ENCODE measurements at regions of chr3 and their contacts with region 1.

Region 1: DNA sequence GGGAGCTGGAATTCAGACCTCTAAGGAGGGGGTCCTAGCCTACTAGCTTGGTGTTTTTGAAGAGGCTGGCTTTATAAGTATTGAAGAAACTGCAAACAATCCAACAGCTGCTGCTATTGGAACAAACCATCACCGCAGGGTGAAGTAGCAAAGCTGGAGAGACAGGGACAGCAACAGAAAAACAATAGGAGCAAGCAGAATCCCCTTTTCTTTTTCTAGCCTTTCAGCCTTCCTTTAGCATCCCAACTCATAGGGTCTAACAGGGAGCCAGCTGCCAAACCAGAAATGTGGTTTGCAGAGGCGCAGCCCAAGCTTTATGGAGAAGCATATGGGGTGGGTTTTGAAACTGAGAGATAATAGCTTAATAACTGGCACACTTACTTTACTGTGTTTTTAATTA is 106.2 kb upstream of the CHMP2B start:
- DNase-seq: no peak
- ATAC-seq: no peak
- H3K4me3 ChIP-seq: no peak overlapping the region
- H3K27ac ChIP-seq: no peak overlapping the region
- H3K4me1 ChIP-seq: no peaks in the 10 kb centered on the region
- H3K27me3 ChIP-seq: no peaks in the 10 kb centered on the region; the same call in 1 of the 2 replicates
- CTCF ChIP-seq: no peak
- POLR2A ChIP-seq: no peak
- RAD21 ChIP-seq: no peak

Region 2: GRCh38 chr3:87101861-87102625 is 18.8 kb before region 1 on chr3:
- CTCF ChIA-PET with region 1: no interaction called
- POLR2A ChIA-PET with region 1: no interaction called
- dilution Hi-C with region 1: no loop called
- in situ Hi-C with region 1: no loop called
- intact Hi-C with region 1: no loop called
- DNase-seq: no peak
- ATAC-seq: no peak
- H3K4me3 ChIP-seq: no peak overlapping the region
- H3K27ac ChIP-seq: no peak overlapping the region
- H3K4me1 ChIP-seq: no peaks in the 10 kb centered on the region
- H3K27me3 ChIP-seq: no peaks in the 10 kb centered on the region
- CTCF ChIP-seq: no peak
- POLR2A ChIP-seq: no peak
- RAD21 ChIP-seq: no peak

Region 3: GRCh38 chr3:87186618-87187159 is 65.8 kb after region 1 on chr3:
- CTCF ChIA-PET with region 1: no interaction called
- POLR2A ChIA-PET with region 1: no interaction called
- dilution Hi-C with region 1: no loop called
- in situ Hi-C with region 1: no loop called
- intact Hi-C with region 1: loop called (anchors 10 kb)
- DNase-seq: no peak
- ATAC-seq: no peak
- H3K4me3 ChIP-seq: no peak overlapping the region
- H3K27ac ChIP-seq: no peak overlapping the region
- H3K4me1 ChIP-seq: no peaks in the 10 kb centered on the region
- H3K27me3 ChIP-seq: no peaks in the 10 kb centered on the region; the same call in 1 of the 2 replicates
- CTCF ChIP-seq: no peak
- POLR2A ChIP-seq: no peak
- RAD21 ChIP-seq: no peak